Endothelial cell of umbilical vein (primary cell): ENCODE measurements at regions of chr1 and their contacts with region 1.

Region 1: GRCh38 chr1:160006312-160006940 is 25.4 kb downstream of the PIGM start:
- DNase-seq: peak; percentile 55
- H3K4me3 ChIP-seq: no peak overlapping the region
- H3K27ac ChIP-seq: no peak overlapping the region
- H3K4me1 ChIP-seq: no peaks in the 10 kb centered on the region
- H3K27me3 ChIP-seq: peaks cover 16 to 19% of the 10 kb centered on the region in 2 experiments
- CTCF ChIP-seq: peak; percentile 86 to 91
- POLR2A ChIP-seq: no peak

Region 2: DNA sequence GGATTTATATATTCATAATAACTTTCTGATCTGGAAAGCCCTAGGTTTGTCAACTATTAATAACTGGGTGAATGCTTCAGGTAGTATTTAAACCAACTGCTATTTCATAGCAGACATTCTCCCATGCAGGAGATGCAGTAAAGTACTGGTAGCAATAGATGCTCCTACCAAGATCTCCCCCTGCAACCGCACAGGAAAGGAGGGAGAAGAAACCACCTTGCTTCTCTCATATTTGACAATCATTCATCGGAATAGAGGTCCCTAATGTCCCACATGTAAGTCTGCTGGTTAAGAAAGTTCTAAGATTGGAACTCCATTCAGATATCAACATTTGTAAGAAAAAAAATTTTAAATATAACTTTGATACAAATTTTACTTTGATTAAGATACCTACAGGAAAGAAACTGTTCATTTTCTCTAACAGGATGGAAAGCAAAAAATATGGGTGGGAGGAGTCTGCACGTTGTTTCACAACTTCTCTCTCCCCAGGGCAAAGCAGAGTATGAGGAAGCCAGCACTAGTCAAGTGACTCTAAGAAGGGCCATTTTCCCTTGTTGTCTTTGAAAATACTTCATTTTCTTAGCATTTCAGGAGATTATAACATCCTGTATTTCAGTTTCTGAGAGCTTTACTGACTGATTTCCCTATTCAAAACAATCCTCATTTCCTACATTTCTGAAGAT is 1075.2 kb before region 1 on chr1 and contains the start of gene PYHIN1:
- CTCF ChIA-PET with region 1: no interaction called
- POLR2A ChIA-PET with region 1: no interaction called
- dilution Hi-C with region 1: no loop called
- intact Hi-C with region 1: no loop called
- DNase-seq: no peak
- H3K4me3 ChIP-seq: no peak within 1 kb of the TSS
- H3K27ac ChIP-seq: no peak within 1 kb of the TSS
- H3K4me1 ChIP-seq: no peaks in the 10 kb centered on the region
- H3K27me3 ChIP-seq: no peaks in the 10 kb centered on the region
- CTCF ChIP-seq: no peak
- POLR2A ChIP-seq: no peak
- total RNA-seq, gene PYHIN1: not detected in 2 replicates

Region 3: GRCh38 chr1:159161001-159161718 is 845.3 kb before region 1 on chr1:
- CTCF ChIA-PET with region 1: interaction called, 42 read pairs
- POLR2A ChIA-PET with region 1: no interaction called
- dilution Hi-C with region 1: no loop called
- intact Hi-C with region 1: loop called (anchors 1 kb)
- DNase-seq: peak; percentile 86
- H3K4me3 ChIP-seq: no peak overlapping the region
- H3K27ac ChIP-seq: no peak overlapping the region
- H3K4me1 ChIP-seq: peaks cover 7% of the 10 kb centered on the region
- H3K27me3 ChIP-seq: peaks cover 5 to 10% of the 10 kb centered on the region in 2 experiments
- CTCF ChIP-seq: peak; percentile 96 to 99
- POLR2A ChIP-seq: peak; percentile 25

Region 4: GRCh38 chr1:159804924-159805323 is 201.5 kb before region 1 on chr1:
- CTCF ChIA-PET with region 1: interaction called, 121 read pairs
- POLR2A ChIA-PET with region 1: no interaction called
- dilution Hi-C with region 1: no loop called
- intact Hi-C with region 1: no loop called
- DNase-seq: no peak
- H3K4me3 ChIP-seq: no peak overlapping the region
- H3K27ac ChIP-seq: no peak overlapping the region
- H3K4me1 ChIP-seq: no peaks in the 10 kb centered on the region
- H3K27me3 ChIP-seq: peaks cover 0 to 2% of the 10 kb centered on the region in 2 experiments
- CTCF ChIP-seq: no peak
- POLR2A ChIP-seq: no peak

Region 5: GRCh38 chr1:159945483-159946241 is 60.8 kb before region 1 on chr1 and contains the start of gene IGSF9:
- CTCF ChIA-PET with region 1: interaction called, 169 read pairs
- POLR2A ChIA-PET with region 1: no interaction called
- dilution Hi-C with region 1: no loop called
- intact Hi-C with region 1: loop called (anchors 2 kb)
- DNase-seq: peak; percentile 85
- H3K4me3 ChIP-seq: peak within 1 kb of the TSS in 2 of 3 experiments; percentile 15 to 16
- H3K27ac ChIP-seq: no peak within 1 kb of the TSS
- H3K4me1 ChIP-seq: peaks cover 5% of the 10 kb centered on the region
- H3K27me3 ChIP-seq: peaks cover 22 to 36% of the 10 kb centered on the region in 2 experiments
- CTCF ChIP-seq: peak; percentile 47 to 72
- POLR2A ChIP-seq: no peak
- total RNA-seq, gene IGSF9: 0.15 and 0.16 TPM in 2 replicates

Region 6: GRCh38 chr1:160018900-160019299 is 12.5 kb after region 1 on chr1:
- CTCF ChIA-PET with region 1: interaction called, 59 read pairs
- POLR2A ChIA-PET with region 1: no interaction called
- dilution Hi-C with region 1: no loop called
- intact Hi-C with region 1: no loop called
- DNase-seq: no peak
- H3K4me3 ChIP-seq: no peak overlapping the region
- H3K27ac ChIP-seq: no peak overlapping the region
- H3K4me1 ChIP-seq: no peaks in the 10 kb centered on the region
- H3K27me3 ChIP-seq: peaks cover 11 to 13% of the 10 kb centered on the region in 2 experiments
- CTCF ChIP-seq: no peak
- POLR2A ChIP-seq: no peak